ENCODE measurements at regions of chr19 and their contacts with region 1.

Region 1: GRCh38 chr19:32309711-32310390 is 35.6 kb upstream of the ZNF507 start:
- DNase-seq: no peak
- H3K4me3 ChIP-seq: no peak overlapping the region
- H3K27ac ChIP-seq: no peak overlapping the region
- H3K4me1 ChIP-seq: no peaks in the 10 kb centered on the region
- H3K27me3 ChIP-seq: peaks cover 0 to 31% of the 10 kb centered on the region in 2 donors
- CTCF ChIP-seq: no peak
- POLR2A ChIP-seq: no peak

Region 2: DNA sequence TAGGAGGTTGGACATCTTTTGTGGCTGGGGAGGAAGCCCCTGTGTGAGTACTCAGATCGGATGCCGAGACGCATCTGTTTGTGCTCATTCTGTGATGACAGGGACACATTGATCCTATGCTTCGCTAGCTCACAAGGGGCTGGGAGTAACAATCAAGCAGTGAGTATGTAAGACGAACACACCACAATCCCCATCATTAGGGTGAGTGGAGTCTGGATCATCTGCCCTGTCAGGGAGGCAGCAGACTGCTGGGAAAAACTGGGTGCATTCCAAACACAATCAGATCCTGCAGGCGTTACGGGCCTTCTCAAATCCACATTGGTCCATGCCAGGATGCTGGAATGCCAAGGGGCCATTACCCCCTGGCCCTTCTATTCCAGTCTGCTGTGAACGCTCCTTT is 896.5 kb before region 1 on chr19:
- intact Hi-C with region 1: loop called (anchors 5 kb)
- DNase-seq: no peak
- H3K4me3 ChIP-seq: no peak overlapping the region
- H3K27ac ChIP-seq: no peak overlapping the region
- H3K4me1 ChIP-seq: no peaks in the 10 kb centered on the region
- H3K27me3 ChIP-seq: peaks cover 0 to 4% of the 10 kb centered on the region in 2 donors
- CTCF ChIP-seq: no peak
- POLR2A ChIP-seq: no peak

Measured in breast epithelium (tissue), 4 donors.